ENCODE measurements at regions of chr19 and their contacts with region 1.

Region 1: DNA sequence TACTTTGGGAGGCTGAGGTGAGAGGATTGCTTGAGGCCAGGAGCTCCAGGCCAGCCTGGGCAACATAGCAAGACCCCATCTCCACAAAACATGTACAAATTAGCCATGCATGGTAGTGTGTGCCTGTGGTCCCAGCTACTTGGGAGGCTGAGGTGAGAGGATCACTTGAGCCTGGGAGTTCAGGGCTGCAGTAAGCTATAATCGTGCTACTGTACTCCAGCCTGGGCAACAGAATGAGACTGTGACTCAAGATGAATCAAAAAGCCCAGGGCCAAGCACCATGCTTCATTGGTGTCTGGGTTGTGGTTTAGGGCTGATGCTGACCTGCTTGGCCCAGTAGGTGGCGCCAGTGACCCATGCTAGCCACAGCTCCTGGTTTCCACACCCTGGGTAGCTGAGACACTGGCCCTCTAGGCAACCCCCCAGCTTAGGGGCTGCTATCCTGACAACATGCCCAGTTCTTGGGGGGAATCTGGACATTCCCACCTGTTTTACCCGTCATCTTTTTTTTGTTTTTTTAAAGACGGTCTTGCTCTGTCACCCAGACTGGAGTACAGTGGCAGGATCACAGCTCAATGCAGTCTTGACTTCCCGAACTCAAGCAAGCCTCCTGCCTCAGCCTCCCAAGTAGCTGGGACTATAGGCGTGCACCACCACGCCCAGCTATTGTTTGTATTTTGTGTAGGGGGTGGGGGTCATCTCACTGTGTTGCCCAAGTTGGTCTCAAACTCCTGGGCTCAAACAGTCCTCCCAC is 5.5 kb downstream of the CCDC124 start:
- DNase-seq: peak; percentile 92
- H3K4me3 ChIP-seq: no peak overlapping the region; a peak in 1 of 4 replicates
- H3K27ac ChIP-seq: no peak overlapping the region; a peak in 1 of 4 replicates
- H3K4me1 ChIP-seq: peaks cover 0 to 7% of the 10 kb centered on the region in 2 experiments; a peak in 1 of 4 replicates
- H3K27me3 ChIP-seq: no peaks in the 10 kb centered on the region
- CTCF ChIP-seq: peak; percentile 95
- EP300 ChIP-seq: no peak
- RAD21 ChIP-seq: peak; percentile 94

Region 2: DNA sequence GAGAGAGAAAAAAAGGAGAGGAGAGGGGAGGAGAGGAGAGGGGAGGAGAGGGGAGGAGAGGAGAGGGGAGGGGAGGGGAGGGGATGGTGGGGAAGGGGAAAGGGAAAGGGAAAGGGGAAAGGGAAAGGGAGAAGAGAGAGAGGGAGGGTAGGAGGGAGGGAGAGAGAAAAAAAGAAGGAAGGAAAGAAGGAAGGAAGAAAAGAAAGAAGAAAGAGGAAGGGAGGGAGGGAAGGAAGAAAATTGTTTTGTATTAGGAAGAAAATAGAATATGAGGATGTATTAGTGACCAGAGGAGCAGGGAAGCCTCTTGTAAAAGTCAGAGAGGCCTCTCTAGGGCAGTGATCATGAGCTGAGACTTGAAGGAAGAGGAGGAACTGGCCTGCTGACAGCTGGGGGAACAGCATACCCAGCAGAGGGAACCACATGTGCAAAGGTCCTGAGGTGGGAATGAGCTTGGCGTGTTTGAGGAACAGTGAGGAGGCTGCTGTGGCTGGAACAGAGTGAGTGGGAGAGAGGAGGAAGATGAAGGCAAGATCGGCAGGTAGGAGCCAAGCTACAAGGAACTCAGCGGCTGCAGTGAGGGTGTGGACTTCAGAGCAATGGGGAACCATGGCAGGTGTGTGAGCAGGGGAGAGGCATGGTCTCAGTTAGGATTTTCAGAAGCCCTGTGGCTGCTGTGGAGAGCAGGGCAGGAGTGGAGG is 19.0 kb after region 1 on chr19:
- CTCF ChIA-PET with region 1: interaction called, 21 read pairs
- POLR2A ChIA-PET with region 1: no interaction called
- DNase-seq: no peak
- H3K4me3 ChIP-seq: no peak overlapping the region
- H3K27ac ChIP-seq: no peak overlapping the region
- H3K4me1 ChIP-seq: peaks cover 0 to 3% of the 10 kb centered on the region in 2 experiments; a peak in 1 of 4 replicates
- H3K27me3 ChIP-seq: peaks cover 29% of the 10 kb centered on the region
- CTCF ChIP-seq: no peak
- EP300 ChIP-seq: no peak
- RAD21 ChIP-seq: no peak

Region 3: DNA sequence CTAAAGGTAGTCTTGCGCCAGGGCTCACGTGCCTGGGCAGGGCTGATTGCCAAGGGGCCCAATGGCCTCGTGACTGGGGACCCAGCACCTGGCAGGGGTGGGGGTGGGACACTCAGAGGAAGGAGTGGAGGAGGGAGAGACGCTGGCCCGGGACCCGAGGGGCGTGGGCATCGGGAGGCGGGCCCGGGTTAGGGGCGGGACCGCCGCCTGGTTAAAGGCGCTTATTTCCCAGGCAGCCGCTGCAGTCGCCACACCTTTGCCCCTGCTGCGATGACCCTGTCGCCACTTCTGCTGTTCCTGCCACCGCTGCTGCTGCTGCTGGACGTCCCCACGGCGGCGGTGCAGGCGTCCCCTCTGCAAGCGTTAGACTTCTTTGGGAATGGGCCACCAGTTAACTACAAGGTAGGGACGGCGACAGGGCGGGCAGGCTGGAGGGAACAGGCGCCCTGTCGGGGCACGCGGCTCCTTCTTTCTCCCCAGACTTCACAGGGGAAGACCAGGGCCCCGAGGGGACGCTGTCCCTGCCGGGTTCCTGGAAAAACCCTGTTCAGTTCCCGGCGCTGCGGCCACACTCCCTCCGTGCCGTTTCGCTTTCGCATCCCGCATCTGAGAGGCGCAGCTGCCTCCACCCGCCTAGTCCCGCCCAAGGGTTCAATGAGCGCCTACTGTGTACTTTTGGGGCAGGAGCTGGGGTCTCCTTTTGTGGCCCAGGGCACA is 235.5 kb after region 1 on chr19 and contains the start of gene IFI30:
- CTCF ChIA-PET with region 1: no interaction called
- POLR2A ChIA-PET with region 1: no interaction called
- DNase-seq: peak; percentile 88
- H3K4me3 ChIP-seq: peak within 1 kb of the TSS; percentile 63 to 78
- H3K27ac ChIP-seq: no peak within 1 kb of the TSS; a peak in 1 of 4 replicates
- H3K4me1 ChIP-seq: peaks cover 0 to 8% of the 10 kb centered on the region in 2 experiments; a peak in 1 of 4 replicates
- H3K27me3 ChIP-seq: no peaks in the 10 kb centered on the region
- CTCF ChIP-seq: no peak
- EP300 ChIP-seq: no peak
- RAD21 ChIP-seq: no peak
- polyA plus RNA-seq, gene IFI30: 10.7 and 11.6 TPM in 2 replicates

Measured in SK-N-SH (cell line).